ENCODE measurements at regions of chr16 and their contacts with region 1.

Region 1: DNA sequence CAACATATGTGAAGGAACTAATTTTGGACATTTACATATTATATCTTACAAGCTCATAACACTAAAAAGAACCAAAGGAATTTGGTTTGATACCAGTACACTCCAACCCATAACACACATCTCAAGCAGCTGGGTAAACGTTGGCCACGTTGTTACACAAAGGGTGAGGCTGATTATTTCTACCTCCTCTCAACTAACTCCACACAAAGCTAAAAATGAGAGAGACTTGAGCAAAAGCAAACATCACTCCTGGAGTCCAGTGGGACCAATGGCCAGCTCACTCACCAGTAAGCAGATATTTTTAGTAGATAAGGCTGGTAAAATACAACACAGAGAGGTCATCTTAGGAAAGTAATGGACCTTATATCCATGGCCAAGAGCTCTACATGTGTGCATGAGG is 207.6 kb downstream of the MRTFB start:
- DNase-seq: no peak
- H3K4me3 ChIP-seq: no peak overlapping the region
- H3K27ac ChIP-seq: no peak overlapping the region
- H3K4me1 ChIP-seq: no peaks in the 10 kb centered on the region
- H3K27me3 ChIP-seq: no peaks in the 10 kb centered on the region
- CTCF ChIP-seq: no peak
- POLR2A ChIP-seq: no peak

Region 2: GRCh38 chr16:14041164-14041563 is 237.6 kb before region 1 on chr16:
- intact Hi-C with region 1: no loop called
- DNase-seq: no peak
- H3K4me3 ChIP-seq: no peak overlapping the region
- H3K27ac ChIP-seq: no peak overlapping the region
- H3K4me1 ChIP-seq: no peaks in the 10 kb centered on the region
- H3K27me3 ChIP-seq: no peaks in the 10 kb centered on the region
- CTCF ChIP-seq: no peak
- POLR2A ChIP-seq: no peak

Region 3: GRCh38 chr16:14219983-14220382 is 58.8 kb before region 1 on chr16:
- intact Hi-C with region 1: no loop called
- DNase-seq: no peak
- H3K4me3 ChIP-seq: no peak overlapping the region
- H3K27ac ChIP-seq: no peak overlapping the region
- H3K4me1 ChIP-seq: no peaks in the 10 kb centered on the region
- H3K27me3 ChIP-seq: no peaks in the 10 kb centered on the region
- CTCF ChIP-seq: no peak
- POLR2A ChIP-seq: no peak

Region 4: DNA sequence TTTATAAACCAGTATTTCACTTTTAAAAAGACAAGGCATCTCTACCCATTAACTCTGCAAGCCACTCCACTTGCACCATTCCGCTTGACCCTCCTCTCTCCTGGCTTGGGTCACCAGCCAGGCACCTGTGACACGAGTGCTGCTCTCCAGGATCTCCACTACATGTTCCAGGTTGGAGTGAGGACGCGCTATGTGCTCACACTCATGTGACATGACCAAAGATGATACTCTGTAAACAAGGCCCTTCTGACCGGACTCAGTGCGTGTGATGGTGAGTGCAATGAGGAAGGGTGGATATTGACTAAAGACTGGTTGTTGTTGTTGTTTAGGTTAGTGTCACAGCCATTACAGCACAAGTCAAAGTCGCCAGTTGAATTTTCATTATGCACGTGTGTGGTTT is 15.0 kb before region 1 on chr16:
- intact Hi-C with region 1: loop called (anchors 1 kb)
- DNase-seq: no peak
- H3K4me3 ChIP-seq: no peak overlapping the region
- H3K27ac ChIP-seq: no peak overlapping the region
- H3K4me1 ChIP-seq: no peaks in the 10 kb centered on the region
- H3K27me3 ChIP-seq: no peaks in the 10 kb centered on the region
- CTCF ChIP-seq: no peak
- POLR2A ChIP-seq: no peak